CD8-positive, alpha-beta T cell (primary cell): ENCODE measurements at regions of chr12 and their contacts with region 1.

Region 1: GRCh38 chr12:91033251-91033650 is 24.6 kb downstream of the KERA start:
- DNase-seq: no peak
- ATAC-seq: no peak
- H3K4me3 ChIP-seq: no peak overlapping the region
- H3K4me3 Mint-ChIP-seq: no peak overlapping the region
- H3K27ac ChIP-seq: no peak overlapping the region
- H3K27ac Mint-ChIP-seq: no peak overlapping the region
- H3K4me1 ChIP-seq: no peaks in the 10 kb centered on the region
- H3K4me1 Mint-ChIP-seq: no peaks in the 10 kb centered on the region
- H3K27me3 ChIP-seq: no peaks in the 10 kb centered on the region
- H3K27me3 Mint-ChIP-seq: no peaks in the 10 kb centered on the region
- CTCF ChIP-seq: no peak

Region 2: DNA sequence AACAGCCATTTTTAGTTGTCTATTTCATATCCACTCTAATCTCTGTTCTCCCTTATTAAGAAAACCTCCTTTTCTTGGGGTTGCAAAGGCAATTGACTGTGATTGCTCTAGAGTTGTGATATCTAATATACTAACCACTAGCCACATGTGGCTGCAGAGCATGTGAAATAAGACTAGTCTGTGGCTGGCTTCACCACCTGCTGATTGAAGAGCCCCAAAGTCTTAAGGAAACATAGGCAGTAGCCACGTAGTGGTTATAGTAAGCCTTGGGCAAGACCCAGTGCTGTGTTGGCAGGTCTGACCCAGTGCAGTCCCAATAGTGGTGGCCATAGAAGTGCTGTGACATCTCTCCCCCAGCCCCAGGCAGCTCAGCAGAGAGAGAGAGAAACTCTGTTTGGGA is 1296.3 kb before region 1 on chr12:
- CTCF ChIA-PET with region 1: no interaction called
- POLR2A ChIA-PET with region 1: no interaction called
- intact Hi-C with region 1: loop called in 1 of 2 experiments (anchors 5 kb)
- DNase-seq: peak in 2 of 9 experiments; percentile 13 to 17
- ATAC-seq: no peak
- H3K4me3 ChIP-seq: no peak overlapping the region
- H3K4me3 Mint-ChIP-seq: no peak overlapping the region
- H3K27ac ChIP-seq: no peak overlapping the region
- H3K27ac Mint-ChIP-seq: no peak overlapping the region
- H3K4me1 ChIP-seq: peaks cover 5% of the 10 kb centered on the region
- H3K4me1 Mint-ChIP-seq: peaks cover 7% of the 10 kb centered on the region
- H3K27me3 ChIP-seq: no peaks in the 10 kb centered on the region
- H3K27me3 Mint-ChIP-seq: no peaks in the 10 kb centered on the region
- CTCF ChIP-seq: no peak